PC-9 (cell line): ENCODE measurements at regions of chr14 and their contacts with region 1.

Region 1: DNA sequence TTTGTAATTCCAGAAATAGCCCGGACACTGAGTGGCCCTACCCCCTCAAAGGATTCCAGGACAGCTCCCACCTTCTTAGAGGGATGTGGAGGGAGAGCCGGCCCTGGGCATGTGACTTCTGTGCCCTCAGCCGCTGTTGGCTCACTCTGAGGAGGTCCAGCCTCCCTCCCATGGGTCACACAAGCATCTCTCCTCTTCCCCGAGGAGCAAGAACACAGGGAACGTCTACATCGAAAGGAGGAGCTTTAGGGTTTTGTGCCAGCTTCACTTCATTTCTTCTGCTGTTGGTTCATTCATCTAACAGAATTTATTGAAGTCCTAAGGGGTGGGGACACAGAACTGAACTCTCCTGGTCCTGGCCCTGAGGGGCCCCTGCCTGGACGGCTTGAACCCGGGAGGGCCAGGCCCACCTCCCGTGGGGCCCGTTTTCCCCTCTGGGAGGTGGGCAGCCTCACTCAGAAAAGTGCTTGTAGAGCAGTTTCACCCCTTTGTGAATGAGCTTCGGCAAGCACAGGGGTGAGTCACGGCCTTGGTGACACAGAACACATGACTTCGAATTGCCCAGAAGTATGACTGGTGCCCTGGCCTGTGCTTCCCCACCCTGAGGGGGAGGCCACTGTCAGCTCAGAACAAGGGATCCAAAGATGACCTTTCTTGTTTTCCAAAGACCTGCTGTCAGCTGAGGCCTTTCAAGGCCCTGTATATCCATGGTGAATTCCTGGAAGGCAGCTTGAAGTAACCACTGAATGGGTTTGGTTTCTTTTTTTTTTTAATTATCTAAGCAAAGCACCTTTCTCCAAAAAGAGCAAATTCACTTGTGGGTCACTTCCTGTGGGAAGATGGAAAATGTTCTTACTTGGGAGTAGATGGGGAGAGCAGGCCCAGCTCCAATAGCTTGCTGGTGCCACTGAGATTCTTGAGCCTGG is 39.2 kb downstream of the NFKBIA start:
- DNase-seq: peak; percentile 56 to 78
- H3K4me3 ChIP-seq: no peak overlapping the region
- H3K27ac ChIP-seq: peak overlapping the region; percentile 70
- H3K4me1 ChIP-seq: peaks cover 23% of the 10 kb centered on the region
- H3K27me3 ChIP-seq: no peaks in the 10 kb centered on the region
- CTCF ChIP-seq: no peak

Region 2: DNA sequence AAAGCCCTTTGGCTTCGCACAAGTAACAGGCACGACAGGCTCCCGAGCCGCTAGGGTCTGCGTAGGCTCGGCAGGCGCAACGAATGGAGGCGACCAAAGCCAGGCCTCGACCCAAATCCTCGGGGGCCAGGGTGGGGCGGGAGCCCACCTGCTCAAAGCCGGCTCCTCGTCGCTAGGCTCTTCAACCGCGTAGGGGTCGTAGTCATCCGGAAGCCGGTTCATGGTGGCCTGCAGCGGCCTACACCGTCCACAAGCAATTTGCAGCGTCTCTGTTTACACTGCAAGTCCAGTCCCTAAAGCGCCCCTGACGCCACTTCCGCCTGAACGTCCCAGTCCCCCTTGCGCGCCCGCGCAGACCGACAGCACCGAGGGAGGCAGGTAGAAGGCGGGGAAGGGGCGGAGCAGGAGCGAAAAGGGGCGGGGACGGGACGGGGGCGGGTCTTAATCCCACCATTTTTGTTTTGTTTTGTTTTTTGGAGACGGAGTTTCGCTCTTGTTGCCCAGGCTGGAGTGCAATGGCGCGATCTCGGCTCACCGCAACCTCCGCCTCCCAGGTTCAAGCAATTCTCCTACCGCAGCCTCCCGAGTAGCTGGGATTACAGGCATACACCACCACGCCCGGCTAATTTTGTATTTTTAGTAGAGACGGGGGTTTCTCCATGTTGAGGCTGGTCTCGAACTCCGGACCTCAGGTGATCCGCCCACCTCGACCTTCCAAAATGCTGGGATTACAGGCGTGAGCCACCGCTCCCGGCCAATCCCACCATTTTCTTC is 825.8 kb before region 1 on chr14 and contains the start of gene EAPP:
- CTCF ChIA-PET with region 1: no interaction called
- POLR2A ChIA-PET with region 1: interaction called, 12 read pairs
- intact Hi-C with region 1: no loop called
- DNase-seq: peak; percentile 86 to 90
- H3K4me3 ChIP-seq: peak within 1 kb of the TSS; percentile 84
- H3K27ac ChIP-seq: peak within 1 kb of the TSS; percentile 75
- H3K4me1 ChIP-seq: no peaks in the 10 kb centered on the region
- H3K27me3 ChIP-seq: no peaks in the 10 kb centered on the region
- CTCF ChIP-seq: no peak
- total RNA-seq, gene EAPP: 23.2 and 27.2 TPM in 2 replicates

Region 3: DNA sequence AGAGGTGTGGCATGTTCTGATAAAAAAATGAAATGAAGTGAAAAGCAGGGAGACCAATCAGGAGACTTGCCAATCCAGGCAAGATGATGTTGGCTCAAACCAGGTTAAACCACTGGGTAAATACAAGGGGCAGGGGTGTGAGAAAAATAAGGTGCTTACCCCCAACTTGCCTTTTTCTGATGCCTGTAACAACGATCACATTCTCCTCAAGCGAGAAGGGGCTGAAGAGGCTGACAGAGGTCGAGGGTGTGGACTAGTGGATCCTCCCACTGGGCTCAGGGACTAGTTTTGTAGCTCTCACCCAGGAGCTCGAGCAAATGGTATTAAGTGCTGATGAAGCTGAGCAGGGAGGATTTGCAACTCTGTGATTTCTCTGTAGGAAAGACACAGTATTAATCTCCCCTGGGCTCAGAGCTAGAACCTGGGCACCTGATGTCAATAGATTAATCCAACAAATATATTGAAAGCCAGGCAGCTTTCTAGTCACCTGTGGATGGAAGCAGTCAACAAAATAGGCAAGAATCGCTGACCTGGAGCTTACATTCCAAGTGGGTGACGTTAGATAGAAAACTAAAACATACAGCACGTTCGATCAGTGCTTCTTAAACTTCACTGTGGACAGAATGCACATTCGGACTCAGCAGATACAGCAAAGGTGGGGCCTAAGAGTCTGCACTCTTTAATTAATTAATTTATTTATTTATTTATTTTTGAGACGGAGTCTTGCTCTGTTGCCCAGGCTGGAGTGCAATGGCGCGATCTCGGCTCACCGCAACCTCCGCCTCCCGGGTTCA is 810.7 kb before region 1 on chr14:
- CTCF ChIA-PET with region 1: no interaction called
- POLR2A ChIA-PET with region 1: interaction called, 10 read pairs
- intact Hi-C with region 1: no loop called
- DNase-seq: no peak
- H3K4me3 ChIP-seq: peak overlapping the region; percentile 18; the same call in 1 of the 2 replicates
- H3K27ac ChIP-seq: peak overlapping the region; percentile 19; the same call in 1 of the 2 replicates
- H3K4me1 ChIP-seq: 0 out of 2 replicates have a peak, but pooled peaks cover 5% of the 10 kb centered on the region
- H3K27me3 ChIP-seq: no peaks in the 10 kb centered on the region
- CTCF ChIP-seq: no peak

Region 4: DNA sequence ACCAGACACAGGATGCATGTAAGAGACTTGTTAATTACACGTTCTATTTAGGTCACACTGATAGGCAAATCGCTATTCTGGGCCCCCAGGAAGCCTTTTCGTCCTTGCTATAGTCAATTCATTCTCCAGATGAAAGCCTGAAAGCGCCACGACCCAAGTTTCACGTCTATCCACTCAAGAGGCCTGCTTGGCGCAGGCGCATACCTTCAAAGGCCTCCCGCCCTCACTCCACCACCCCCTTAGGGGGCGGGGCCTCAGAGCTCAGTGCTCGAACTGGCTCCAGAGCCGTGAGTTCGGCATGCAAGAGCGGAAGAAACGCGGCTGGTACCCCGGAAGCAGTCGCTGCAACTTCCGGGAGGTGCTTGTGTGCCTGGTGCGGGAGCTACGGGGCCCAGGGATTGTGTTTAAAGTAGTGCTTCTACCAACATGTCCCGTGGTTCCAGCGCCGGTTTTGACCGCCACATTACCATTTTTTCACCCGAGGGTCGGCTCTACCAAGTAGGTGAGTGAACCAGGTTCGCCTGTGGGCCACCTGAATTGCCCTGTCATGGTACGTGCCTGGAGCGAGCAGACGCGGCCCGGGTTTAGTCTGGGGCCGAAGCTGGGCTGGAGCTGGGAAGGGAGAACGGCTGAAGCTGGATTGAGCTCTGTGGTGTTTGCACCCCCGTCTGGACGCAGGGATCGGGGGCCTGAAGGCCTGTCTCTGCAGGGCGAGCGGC is 73.2 kb before region 1 on chr14 and contains the start of gene PSMA6:
- CTCF ChIA-PET with region 1: no interaction called
- POLR2A ChIA-PET with region 1: no interaction called
- intact Hi-C with region 1: no loop called
- DNase-seq: peak; percentile 94 to 95
- H3K4me3 ChIP-seq: peak within 1 kb of the TSS; percentile 94
- H3K27ac ChIP-seq: peak within 1 kb of the TSS; percentile 67
- H3K4me1 ChIP-seq: peaks cover 21% of the 10 kb centered on the region
- H3K27me3 ChIP-seq: no peaks in the 10 kb centered on the region
- CTCF ChIP-seq: no peak
- total RNA-seq, gene PSMA6: 118 and 188 TPM in 2 replicates